CD8-positive, alpha-beta T cell (primary cell): ENCODE measurements at regions of chr17 and their contacts with region 1.

Region 1: GRCh38 chr17:32486111-32486700 is 587 bp upstream of the CDK5R1 start:
- DNase-seq: peak in 8 of 9 experiments; percentile 45 to 89 (median 66)
- ATAC-seq: peak; percentile 78
- H3K4me3 ChIP-seq: no peak overlapping the region
- H3K4me3 Mint-ChIP-seq: peak overlapping the region; percentile 76
- H3K27ac ChIP-seq: no peak overlapping the region
- H3K27ac Mint-ChIP-seq: peak overlapping the region; percentile 39
- H3K4me1 ChIP-seq: peaks cover 44% of the 10 kb centered on the region
- H3K4me1 Mint-ChIP-seq: peaks cover 41% of the 10 kb centered on the region
- H3K27me3 ChIP-seq: no peaks in the 10 kb centered on the region
- H3K27me3 Mint-ChIP-seq: no peaks in the 10 kb centered on the region
- CTCF ChIP-seq: no peak

Region 2: DNA sequence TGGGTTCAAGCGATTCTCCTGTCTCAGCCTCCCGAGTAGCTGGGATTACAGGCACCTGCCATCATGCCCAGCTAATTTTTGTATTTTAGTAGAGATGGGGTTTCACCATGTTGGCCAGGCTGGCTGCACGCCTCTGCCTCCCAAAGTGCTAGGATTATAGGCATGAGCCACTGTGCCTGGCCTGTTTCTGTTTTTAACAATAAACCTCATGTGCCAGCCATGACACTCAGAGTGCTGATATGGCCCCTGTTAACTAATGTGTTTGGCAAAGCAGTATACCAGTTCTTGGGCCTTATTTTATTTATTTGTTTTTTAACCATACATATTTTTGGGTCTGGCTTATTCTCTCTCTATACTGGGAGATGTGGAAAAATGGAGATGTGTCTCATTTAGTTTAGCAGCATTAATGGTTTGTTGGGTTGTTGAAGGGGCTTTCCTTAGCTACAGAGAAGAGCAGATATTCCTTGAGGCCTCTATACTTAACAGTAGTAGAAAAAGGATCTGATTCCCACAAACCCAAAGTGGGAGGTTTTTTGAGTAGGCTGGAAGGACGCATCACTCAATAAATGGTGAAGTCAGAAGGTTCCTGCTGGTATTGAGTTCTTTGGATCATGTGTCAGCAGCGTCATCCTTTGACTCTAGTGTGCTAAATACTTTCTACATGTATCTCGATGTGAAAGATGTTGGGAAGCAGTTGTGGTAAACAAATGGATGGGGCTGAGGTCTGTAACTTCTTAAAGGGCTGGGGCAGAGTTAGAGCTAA is 15.6 kb before region 1 on chr17:
- CTCF ChIA-PET with region 1: interaction called, 120 read pairs
- POLR2A ChIA-PET with region 1: interaction called, 3 read pairs
- intact Hi-C with region 1: no loop called
- DNase-seq: no peak
- ATAC-seq: no peak
- H3K4me3 ChIP-seq: no peak overlapping the region
- H3K4me3 Mint-ChIP-seq: no peak overlapping the region
- H3K27ac ChIP-seq: no peak overlapping the region
- H3K27ac Mint-ChIP-seq: no peak overlapping the region
- H3K4me1 ChIP-seq: no peaks in the 10 kb centered on the region
- H3K4me1 Mint-ChIP-seq: no peaks in the 10 kb centered on the region
- H3K27me3 ChIP-seq: no peaks in the 10 kb centered on the region
- H3K27me3 Mint-ChIP-seq: no peaks in the 10 kb centered on the region
- CTCF ChIP-seq: no peak

Region 3: DNA sequence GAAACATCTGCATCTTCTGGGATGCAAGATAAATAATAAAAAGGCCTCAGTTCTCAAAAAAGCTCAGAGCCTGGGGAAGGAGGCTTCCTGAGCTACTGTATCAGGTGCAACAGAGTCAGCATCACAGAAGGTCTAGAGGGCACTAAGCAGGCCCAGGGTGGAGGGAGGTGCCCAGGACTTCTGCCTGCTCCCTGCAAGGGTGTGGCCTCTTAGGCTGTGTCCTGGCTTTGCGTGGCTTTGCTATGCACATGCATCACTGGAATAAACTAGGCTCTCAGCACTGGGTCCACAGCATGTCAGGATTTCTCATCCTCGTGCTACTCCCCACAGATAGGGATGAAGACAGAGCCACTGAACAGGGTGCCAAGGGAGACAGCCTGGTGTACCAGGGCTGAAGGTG is 26.1 kb after region 1 on chr17:
- CTCF ChIA-PET with region 1: interaction called, 15 read pairs
- POLR2A ChIA-PET with region 1: interaction called, 13 read pairs
- intact Hi-C with region 1: no loop called
- DNase-seq: no peak
- ATAC-seq: no peak
- H3K4me3 ChIP-seq: no peak overlapping the region
- H3K4me3 Mint-ChIP-seq: no peak overlapping the region
- H3K27ac ChIP-seq: no peak overlapping the region
- H3K27ac Mint-ChIP-seq: no peak overlapping the region
- H3K4me1 ChIP-seq: peaks cover 66% of the 10 kb centered on the region
- H3K4me1 Mint-ChIP-seq: peaks cover 70% of the 10 kb centered on the region
- H3K27me3 ChIP-seq: no peaks in the 10 kb centered on the region
- H3K27me3 Mint-ChIP-seq: no peaks in the 10 kb centered on the region
- CTCF ChIP-seq: no peak

Region 4: GRCh38 chr17:32588982-32589381 is 102.8 kb after region 1 on chr17:
- CTCF ChIA-PET with region 1: interaction called, 20 read pairs
- POLR2A ChIA-PET with region 1: no interaction called
- intact Hi-C with region 1: no loop called
- DNase-seq: no peak
- ATAC-seq: no peak
- H3K4me3 ChIP-seq: no peak overlapping the region
- H3K4me3 Mint-ChIP-seq: no peak overlapping the region
- H3K27ac ChIP-seq: no peak overlapping the region
- H3K27ac Mint-ChIP-seq: no peak overlapping the region
- H3K4me1 ChIP-seq: no peaks in the 10 kb centered on the region
- H3K4me1 Mint-ChIP-seq: no peaks in the 10 kb centered on the region
- H3K27me3 ChIP-seq: no peaks in the 10 kb centered on the region
- H3K27me3 Mint-ChIP-seq: no peaks in the 10 kb centered on the region
- CTCF ChIP-seq: no peak

Region 5: GRCh38 chr17:32755045-32755805 is 269.0 kb after region 1 on chr17:
- CTCF ChIA-PET with region 1: interaction called, 12 read pairs
- POLR2A ChIA-PET with region 1: no interaction called
- intact Hi-C with region 1: loop called in 1 of 2 experiments (anchors 1 kb)
- DNase-seq: peak in 2 of 9 experiments; percentile 60 to 71
- ATAC-seq: peak; percentile 87
- H3K4me3 ChIP-seq: no peak overlapping the region
- H3K4me3 Mint-ChIP-seq: no peak overlapping the region
- H3K27ac ChIP-seq: no peak overlapping the region
- H3K27ac Mint-ChIP-seq: no peak overlapping the region
- H3K4me1 ChIP-seq: peaks cover 8% of the 10 kb centered on the region
- H3K4me1 Mint-ChIP-seq: peaks cover 10% of the 10 kb centered on the region
- H3K27me3 ChIP-seq: no peaks in the 10 kb centered on the region
- H3K27me3 Mint-ChIP-seq: no peaks in the 10 kb centered on the region
- CTCF ChIP-seq: peak; percentile 54